Breast epithelium (tissue), 4 donors: ENCODE measurements at regions of chr3 and their contacts with region 1.

Region 1: GRCh38 chr3:36477655-36478054 is 97.4 kb downstream of the STAC start:
- DNase-seq: no peak
- H3K4me3 ChIP-seq: no peak overlapping the region
- H3K27ac ChIP-seq: peak overlapping the region in 1 of 2 donors; percentile 59
- H3K4me1 ChIP-seq: no peaks in the 10 kb centered on the region
- H3K27me3 ChIP-seq: no peaks in the 10 kb centered on the region
- CTCF ChIP-seq: no peak
- POLR2A ChIP-seq: no peak

Region 2: GRCh38 chr3:36911990-36912804 is 434.5 kb after region 1 on chr3:
- intact Hi-C with region 1: loop called (anchors 5 kb)
- DNase-seq: no peak
- H3K4me3 ChIP-seq: peak overlapping the region in 1 of 3 donors; percentile 9
- H3K27ac ChIP-seq: peak overlapping the region; percentile 34 to 50
- H3K4me1 ChIP-seq: no peaks in the 10 kb centered on the region
- H3K27me3 ChIP-seq: no peaks in the 10 kb centered on the region
- CTCF ChIP-seq: no peak
- POLR2A ChIP-seq: no peak